ENCODE measurements at regions of chr4 and their contacts with region 1.

Region 1: DNA sequence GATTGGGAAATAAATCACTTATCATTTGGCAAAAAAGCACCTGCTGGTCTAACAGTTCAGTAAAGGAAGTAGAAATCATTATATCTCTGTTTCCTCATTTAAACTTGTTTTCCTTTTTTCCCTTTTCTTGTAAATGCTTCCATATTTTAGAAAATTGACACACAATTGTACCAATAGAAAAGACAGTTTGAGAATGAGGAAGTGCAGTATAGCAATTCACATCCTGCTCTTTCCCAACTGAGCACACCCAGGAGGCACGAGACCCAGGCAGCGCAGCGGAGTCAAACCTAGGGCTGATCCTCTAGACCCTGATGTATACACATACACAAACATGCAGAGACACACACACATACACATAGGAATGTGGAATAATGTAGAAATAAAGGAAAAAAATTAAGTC is 74.8 kb upstream of the PACRGL start:
- DNase-seq: no peak
- H3K4me3 ChIP-seq: no peak overlapping the region
- H3K4me3 Mint-ChIP-seq: no peak overlapping the region
- H3K27ac Mint-ChIP-seq: peak overlapping the region; percentile 18
- H3K4me1 ChIP-seq: peaks cover 55% of the 10 kb centered on the region
- H3K4me1 Mint-ChIP-seq: peaks cover 24% of the 10 kb centered on the region
- H3K27me3 ChIP-seq: no peaks in the 10 kb centered on the region
- H3K27me3 Mint-ChIP-seq: no peaks in the 10 kb centered on the region
- CTCF ChIP-seq: no peak

Region 2: GRCh38 chr4:20641976-20642375 is 16.6 kb after region 1 on chr4:
- CTCF ChIA-PET with region 1: no interaction called
- POLR2A ChIA-PET with region 1: no interaction called
- intact Hi-C with region 1: no loop called
- DNase-seq: no peak
- H3K4me3 ChIP-seq: no peak overlapping the region
- H3K4me3 Mint-ChIP-seq: no peak overlapping the region
- H3K27ac Mint-ChIP-seq: no peak overlapping the region
- H3K4me1 ChIP-seq: no peaks in the 10 kb centered on the region
- H3K4me1 Mint-ChIP-seq: no peaks in the 10 kb centered on the region
- H3K27me3 ChIP-seq: no peaks in the 10 kb centered on the region
- H3K27me3 Mint-ChIP-seq: no peaks in the 10 kb centered on the region
- CTCF ChIP-seq: no peak

Region 3: DNA sequence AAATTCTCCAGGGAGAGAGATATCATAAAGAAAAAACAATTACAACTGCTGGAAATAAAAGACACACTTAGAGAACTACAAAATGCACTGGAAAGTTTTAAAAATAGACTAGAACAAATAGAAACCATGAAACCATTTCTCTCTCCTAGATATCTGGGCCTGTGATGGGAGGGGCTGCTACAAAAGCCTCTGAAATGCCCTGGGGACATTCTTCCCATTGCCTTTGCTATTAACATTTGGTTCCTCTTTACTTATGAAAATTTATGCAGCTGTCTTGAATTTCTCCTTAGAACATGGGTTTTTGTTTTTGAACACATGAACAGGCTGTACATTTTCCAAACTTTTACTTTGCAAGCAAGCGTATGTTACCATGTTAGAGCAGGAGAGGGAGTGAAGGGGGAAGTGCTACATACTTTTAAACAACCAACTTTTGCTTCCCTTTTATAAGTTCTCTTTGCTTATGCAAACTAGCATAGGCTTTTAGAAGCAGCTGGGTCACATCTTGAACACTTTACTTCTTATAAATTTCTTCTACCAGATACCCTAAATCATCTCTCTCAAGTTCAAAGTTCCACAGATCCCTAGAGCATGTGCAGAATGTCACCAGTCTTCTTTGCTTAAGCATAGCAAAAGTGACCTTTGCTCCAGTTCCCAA is 26.9 kb after region 1 on chr4:
- CTCF ChIA-PET with region 1: no interaction called
- POLR2A ChIA-PET with region 1: interaction called, 3 read pairs
- intact Hi-C with region 1: loop called (anchors 1 kb)
- DNase-seq: peak in 1 of 2 experiments; percentile 33
- H3K4me3 ChIP-seq: no peak overlapping the region
- H3K4me3 Mint-ChIP-seq: peak overlapping the region; percentile 35
- H3K27ac Mint-ChIP-seq: peak overlapping the region; percentile 81
- H3K4me1 ChIP-seq: peaks cover 19% of the 10 kb centered on the region
- H3K4me1 Mint-ChIP-seq: peaks cover 20% of the 10 kb centered on the region
- H3K27me3 ChIP-seq: no peaks in the 10 kb centered on the region
- H3K27me3 Mint-ChIP-seq: no peaks in the 10 kb centered on the region
- CTCF ChIP-seq: no peak

Region 4: DNA sequence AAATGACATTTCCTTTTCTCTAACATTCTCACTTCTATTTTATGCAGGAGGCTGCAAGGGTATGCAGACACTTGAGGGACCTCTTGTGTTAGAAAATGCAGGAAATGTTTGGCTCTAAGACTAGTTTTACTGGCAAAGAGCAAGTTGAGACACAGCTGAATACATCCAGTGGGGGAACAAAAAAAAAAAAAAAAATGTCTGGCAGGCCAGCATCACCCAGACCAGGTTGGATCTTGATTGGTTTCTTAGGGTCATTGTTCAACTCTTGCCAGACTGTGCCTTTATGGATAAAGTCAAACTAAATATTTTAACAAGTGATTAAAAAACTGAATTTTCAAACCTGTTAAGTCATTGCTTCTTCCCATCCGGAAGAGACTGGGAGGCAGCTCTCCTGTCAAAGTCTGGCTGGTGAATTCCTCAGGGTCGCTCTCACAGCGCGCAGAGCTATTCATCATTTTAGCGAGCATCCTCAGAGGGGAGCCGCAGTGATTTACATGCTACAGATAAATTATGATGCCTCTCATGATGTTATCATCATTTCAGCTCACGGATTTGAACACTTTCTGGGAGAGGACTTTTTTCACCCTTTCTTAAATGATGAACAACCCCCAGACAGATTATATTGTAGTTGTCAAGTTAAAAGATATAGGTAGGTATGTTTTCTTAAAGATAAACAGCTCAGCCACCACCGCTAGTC is 51.2 kb after region 1 on chr4:
- CTCF ChIA-PET with region 1: no interaction called
- POLR2A ChIA-PET with region 1: no interaction called
- intact Hi-C with region 1: loop called (anchors 5 kb)
- DNase-seq: no peak
- H3K4me3 ChIP-seq: no peak overlapping the region
- H3K4me3 Mint-ChIP-seq: no peak overlapping the region
- H3K27ac Mint-ChIP-seq: no peak overlapping the region
- H3K4me1 ChIP-seq: no peaks in the 10 kb centered on the region
- H3K4me1 Mint-ChIP-seq: peaks cover 7% of the 10 kb centered on the region
- H3K27me3 ChIP-seq: no peaks in the 10 kb centered on the region
- H3K27me3 Mint-ChIP-seq: peaks cover 1% of the 10 kb centered on the region
- CTCF ChIP-seq: no peak